ENCODE measurements at regions of chr6 and their contacts with region 1.

Region 1: DNA sequence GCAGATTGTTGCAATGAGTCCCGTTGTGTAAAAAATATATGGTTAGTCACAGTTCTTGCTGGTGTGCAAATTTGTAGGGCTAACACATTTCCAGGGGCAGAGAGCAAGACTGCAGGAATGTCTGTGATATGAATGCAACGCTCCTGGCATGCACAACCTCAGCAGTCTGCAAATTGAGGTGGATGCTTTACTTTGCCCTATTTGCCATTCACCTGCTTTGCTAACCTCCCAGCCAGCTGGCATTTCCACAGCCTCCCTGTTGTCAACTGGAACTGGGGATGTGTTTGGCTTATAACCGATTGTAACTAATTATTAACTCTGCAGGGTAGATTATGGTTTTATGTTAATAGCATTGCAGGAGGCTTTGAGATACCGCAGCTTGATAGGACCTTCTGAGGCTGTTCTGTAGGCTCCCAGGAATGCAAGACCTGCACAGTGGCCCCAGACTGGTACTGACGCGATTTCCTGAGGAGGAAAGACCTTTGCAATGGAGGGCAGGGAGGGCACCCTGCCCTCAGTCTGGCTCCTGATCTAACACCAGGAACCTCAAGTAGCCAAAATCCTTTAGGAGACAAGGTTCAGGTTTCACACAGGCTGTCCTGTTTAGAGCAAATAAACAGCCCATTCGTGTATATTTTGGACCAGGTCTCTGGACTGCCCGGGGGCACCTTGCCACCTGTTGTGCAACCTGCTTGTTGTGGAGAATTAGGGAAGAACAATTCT is 53.4 kb downstream of the EDN1 start:
- H3K4me3 Mint-ChIP-seq: no peak overlapping the region
- H3K27ac Mint-ChIP-seq: no peak overlapping the region
- H3K4me1 Mint-ChIP-seq: peaks cover 22% of the 10 kb centered on the region
- H3K27me3 Mint-ChIP-seq: peaks cover 33% of the 10 kb centered on the region

Region 2: DNA sequence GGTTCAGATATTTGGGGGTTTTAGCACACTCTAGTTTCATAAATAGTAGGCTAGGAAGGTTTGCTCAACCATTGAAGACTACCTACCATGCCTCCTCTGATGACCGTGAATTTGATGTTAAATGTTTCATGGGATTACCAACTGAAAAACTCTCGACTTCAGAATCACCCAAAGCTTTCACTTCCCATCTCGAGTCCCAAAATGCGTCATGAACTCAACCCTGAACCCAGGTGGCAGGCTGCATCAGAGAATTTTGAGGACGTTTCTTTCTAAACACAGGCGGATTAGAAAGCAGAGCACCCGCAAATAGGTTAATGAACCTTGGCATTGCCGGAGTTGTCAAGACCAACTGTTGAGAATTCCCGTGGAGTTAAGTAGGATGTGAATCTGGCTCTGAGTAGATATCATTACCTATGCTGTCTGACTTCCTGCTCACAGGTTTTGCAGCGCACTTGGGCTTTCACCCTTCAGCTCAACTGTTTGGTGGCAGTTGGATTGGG is 466.6 kb before region 1 on chr6:
- intact Hi-C with region 1: no loop called
- H3K4me3 Mint-ChIP-seq: no peak overlapping the region
- H3K27ac Mint-ChIP-seq: no peak overlapping the region
- H3K4me1 Mint-ChIP-seq: no peaks in the 10 kb centered on the region
- H3K27me3 Mint-ChIP-seq: peaks cover 2% of the 10 kb centered on the region

Region 3: GRCh38 chr6:12331956-12332749 is 11.4 kb before region 1 on chr6:
- intact Hi-C with region 1: no loop called
- H3K4me3 Mint-ChIP-seq: no peak overlapping the region
- H3K27ac Mint-ChIP-seq: no peak overlapping the region
- H3K4me1 Mint-ChIP-seq: peaks cover 22% of the 10 kb centered on the region
- H3K27me3 Mint-ChIP-seq: peaks cover 12% of the 10 kb centered on the region

Region 4: DNA sequence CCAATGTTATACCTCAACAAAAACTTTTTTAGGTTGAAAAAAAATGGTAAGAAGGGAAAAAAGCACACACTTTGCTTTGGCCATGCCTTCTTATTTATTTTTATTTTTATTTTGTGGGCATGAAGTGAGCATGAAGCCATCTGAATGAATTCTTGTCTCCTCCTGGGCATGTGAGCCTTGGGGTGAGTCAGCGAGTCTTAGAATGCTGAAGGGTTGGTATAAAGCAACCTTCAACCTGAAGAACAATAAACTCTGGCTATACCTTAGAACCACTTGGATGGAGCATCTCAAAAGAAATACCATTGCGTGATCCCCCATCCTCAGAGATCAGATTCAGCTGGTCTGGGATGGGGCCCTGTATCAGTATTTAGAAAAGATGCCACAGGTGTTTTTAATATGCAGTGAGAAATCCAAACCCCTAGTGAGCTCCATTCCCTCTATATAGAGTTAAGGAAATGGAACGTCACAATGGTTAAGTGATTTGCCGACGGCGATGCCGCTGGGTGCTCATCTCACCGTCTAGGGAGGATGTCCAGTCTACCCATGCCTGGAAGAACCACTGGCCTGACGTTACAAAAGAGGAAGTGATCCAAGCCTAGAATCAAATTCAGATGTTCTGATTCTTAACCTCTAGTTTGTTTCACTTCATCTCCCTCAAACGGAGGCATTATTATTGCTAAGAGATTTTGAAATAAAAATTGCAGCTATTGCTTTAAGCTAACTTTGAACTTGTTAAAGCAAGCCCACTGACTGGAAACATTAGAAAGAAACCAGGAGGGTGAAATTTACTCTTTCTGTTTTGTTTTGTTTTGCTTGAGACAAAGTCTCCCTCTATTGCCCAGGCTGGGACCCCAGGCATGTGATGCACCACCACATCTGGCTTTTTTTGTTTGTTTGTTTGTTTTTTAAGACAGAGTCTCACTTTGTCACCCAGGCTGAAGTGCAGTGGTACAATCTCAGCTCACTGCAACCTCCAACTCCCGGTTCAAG is 13.7 kb after region 1 on chr6:
- intact Hi-C with region 1: loop called (anchors 2 kb)
- H3K4me3 Mint-ChIP-seq: no peak overlapping the region
- H3K27ac Mint-ChIP-seq: no peak overlapping the region
- H3K4me1 Mint-ChIP-seq: peaks cover 4% of the 10 kb centered on the region
- H3K27me3 Mint-ChIP-seq: peaks cover 17% of the 10 kb centered on the region